Esophagus muscularis mucosa (tissue), 4 donors: ENCODE measurements at regions of chr17 and their contacts with region 1.

Region 1: DNA sequence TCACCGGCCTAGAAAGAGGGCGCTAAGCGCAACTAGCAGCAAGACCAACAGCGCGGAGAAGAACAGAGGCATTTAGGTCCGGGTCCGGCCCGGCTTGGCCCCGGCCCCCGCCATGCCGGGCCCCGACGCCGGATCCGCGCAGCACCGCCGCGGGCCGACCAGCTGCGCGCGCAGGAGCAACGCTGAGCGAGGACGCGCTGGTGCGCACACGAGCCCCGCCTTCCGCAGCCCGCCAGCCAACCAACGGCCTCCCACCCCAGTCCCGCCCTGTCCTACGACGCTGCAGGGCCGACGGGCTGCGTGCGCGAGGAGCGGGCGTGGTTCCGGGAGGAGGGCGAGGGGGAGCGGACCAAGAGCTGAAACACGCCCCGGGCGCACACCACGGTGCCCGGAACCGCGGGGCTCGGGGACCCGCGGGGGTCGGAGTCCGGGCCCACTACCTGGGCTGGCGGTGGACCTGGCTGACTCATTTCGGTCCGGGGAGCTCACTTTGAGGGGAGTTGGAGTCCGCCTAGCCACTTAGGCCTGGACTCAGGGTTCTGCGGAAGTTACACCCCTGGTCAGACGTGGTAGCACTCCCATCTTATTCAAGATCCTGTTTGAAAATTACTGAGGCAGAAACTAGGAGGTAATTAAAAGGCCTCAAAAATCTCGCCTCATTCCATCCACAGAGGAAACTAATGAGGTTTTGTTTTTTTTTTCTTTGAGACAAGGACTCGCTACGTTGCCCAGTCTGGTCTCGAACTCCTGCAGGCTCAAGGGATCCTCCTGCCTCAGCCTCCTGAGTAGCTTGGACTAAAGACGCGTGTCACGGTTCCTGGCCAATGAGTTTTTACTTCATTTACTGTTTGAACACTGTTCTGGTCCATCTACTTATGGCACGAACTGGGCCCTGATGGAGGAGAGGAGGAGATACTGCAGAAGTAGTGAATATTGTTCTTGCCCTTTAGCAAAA is at the start of gene BLTP2:
- DNase-seq: peak; percentile 99
- H3K4me3 ChIP-seq: peak within 1 kb of the TSS; percentile 92 to 100 (median 94)
- H3K27ac ChIP-seq: peak within 1 kb of the TSS; percentile 88 to 97 (median 95)
- H3K4me1 ChIP-seq: peaks cover 28 to 47% (median 42%) of the 10 kb centered on the region in 4 donors
- H3K27me3 ChIP-seq: no peaks in the 10 kb centered on the region
- CTCF ChIP-seq: peak in 2 of 3 experiments; percentile 9 to 26
- EP300 ChIP-seq: no peak
- POLR2A ChIP-seq: peak; percentile 81
- total RNA-seq, gene BLTP2: 90.0 to 127 (median 98.2) TPM

Region 2: DNA sequence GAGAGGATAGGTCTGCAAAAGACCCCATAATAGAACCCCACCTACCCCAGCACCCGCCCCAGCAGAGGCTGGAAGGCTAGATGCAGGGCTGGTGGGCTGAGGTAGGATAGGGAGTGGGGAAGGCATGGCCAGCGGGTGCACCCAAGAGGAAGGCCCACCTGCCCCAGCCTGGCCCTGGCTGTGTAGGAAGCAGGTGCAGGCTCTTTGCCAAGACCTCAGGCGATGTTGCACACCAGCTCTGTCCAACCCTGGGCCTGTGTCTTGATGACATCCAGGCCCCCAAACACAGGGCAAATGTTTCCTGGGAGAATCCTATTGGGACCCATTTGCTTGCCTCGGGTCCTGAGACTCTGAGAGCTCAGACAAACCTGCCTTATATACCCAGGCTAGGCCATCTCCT is 105.0 kb before region 1 on chr17:
- intact Hi-C with region 1: no loop called
- DNase-seq: no peak
- H3K4me3 ChIP-seq: no peak overlapping the region
- H3K27ac ChIP-seq: no peak overlapping the region
- H3K4me1 ChIP-seq: no peaks in the 10 kb centered on the region
- H3K27me3 ChIP-seq: no peaks in the 10 kb centered on the region
- CTCF ChIP-seq: no peak
- EP300 ChIP-seq: no peak
- POLR2A ChIP-seq: no peak

Region 3: GRCh38 chr17:28916302-28916934 is 271.2 kb after region 1 on chr17:
- intact Hi-C with region 1: loop called (anchors 5 kb)
- DNase-seq: no peak
- H3K4me3 ChIP-seq: no peak overlapping the region
- H3K27ac ChIP-seq: peak overlapping the region in 1 of 4 donors; percentile 14
- H3K4me1 ChIP-seq: peaks cover 0 to 13% (median 2%) of the 10 kb centered on the region in 4 donors
- H3K27me3 ChIP-seq: peaks cover 0 to 3% (median 0%) of the 10 kb centered on the region in 4 donors
- CTCF ChIP-seq: peak; percentile 62 to 71 (median 64)
- EP300 ChIP-seq: no peak
- POLR2A ChIP-seq: no peak